Activated T-helper 1 cell treated with anti-CD3 and anti-CD28 coated beads, Interleukin-12 subunit alpha, Interleukin-12 subunit beta, Interleukin-2, Interleukin-4 antibody, amounts not matched to agents 30 ng/mL and 10 ng/mL and 1 ng/mL, durations not matched to agents 14 hours and 24 hours and 36 hours (primary cell): ENCODE measurements at regions of chr9 and their contacts with region 1.

Region 1: GRCh38 chr9:5586391-5586802 is 42.5 kb upstream of the RIC1 start:
- DNase-seq: peak; percentile 26
- H3K4me3 Mint-ChIP-seq: peak overlapping the region; percentile 35
- H3K27ac Mint-ChIP-seq: peak overlapping the region; percentile 95
- H3K4me1 Mint-ChIP-seq: peaks cover 64% of the 10 kb centered on the region
- H3K27me3 Mint-ChIP-seq: no peaks in the 10 kb centered on the region

Region 2: DNA sequence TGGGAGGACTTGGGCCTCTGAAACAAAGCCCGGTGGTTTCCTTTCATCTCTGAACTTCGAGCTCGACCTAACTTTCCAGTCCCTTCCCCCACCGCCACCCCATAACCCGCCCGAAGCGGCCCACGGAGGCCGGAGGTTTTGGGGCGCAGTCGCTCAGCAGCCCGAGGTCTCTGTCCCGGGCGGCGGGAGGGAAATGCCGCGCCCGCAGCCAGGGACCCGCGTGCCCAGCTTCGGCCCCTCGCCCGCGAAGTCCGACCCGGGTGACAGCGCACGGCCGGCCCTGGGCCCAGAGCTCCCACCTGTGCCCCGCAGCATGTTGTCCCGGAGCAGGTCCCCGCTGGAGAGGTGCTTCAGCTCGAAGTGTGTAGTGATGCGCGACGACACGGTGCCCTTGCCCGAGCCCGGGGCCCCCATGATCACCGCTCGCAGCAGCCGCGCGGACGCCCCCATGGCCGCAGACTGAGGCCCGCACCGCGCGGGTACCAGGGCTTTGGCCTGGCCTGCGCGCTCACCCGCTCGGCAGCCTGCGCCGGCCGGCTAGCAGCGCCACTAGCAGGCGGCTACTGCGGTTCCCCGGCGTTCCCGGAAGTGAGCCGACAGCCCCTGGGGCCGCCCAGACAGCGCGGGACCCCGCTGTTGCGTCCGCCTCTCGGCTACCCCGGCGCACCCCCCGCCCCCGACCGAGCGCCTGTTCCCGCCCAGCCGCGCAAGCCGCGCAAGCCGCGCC is 845.6 kb before region 1 on chr9 and contains the start of gene AK3:
- intact Hi-C with region 1: loop called (anchors 5 kb)
- DNase-seq: peak; percentile 81
- H3K4me3 Mint-ChIP-seq: peak within 1 kb of the TSS; percentile 89
- H3K27ac Mint-ChIP-seq: peak within 1 kb of the TSS; percentile 92
- H3K4me1 Mint-ChIP-seq: peaks cover 29% of the 10 kb centered on the region
- H3K27me3 Mint-ChIP-seq: no peaks in the 10 kb centered on the region
- total RNA-seq, gene AK3: 23.9 and 28.5 TPM in 2 replicates

Region 3: DNA sequence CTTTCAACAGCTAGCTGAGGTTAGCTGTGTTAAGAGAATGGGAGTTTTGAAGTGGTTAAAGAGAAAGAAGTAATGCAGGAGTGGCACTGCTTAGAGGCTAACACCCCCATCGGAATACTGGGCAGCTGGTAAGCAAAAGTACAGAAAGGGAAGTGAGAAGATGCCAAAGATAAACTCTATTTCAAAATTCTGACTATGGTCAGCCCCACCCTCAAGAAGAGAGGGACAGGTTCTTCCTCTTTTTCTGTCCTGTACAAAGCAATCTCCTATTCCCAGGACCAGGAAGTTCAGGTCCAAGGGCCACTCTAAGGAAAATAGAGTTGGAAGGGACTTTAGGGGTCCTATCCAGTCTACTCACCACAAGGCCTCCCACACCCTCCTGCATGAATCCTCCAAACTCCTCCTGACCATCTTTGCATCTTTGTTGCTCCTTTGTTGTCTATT is 647.3 kb before region 1 on chr9:
- intact Hi-C with region 1: loop called (anchors 5 kb)
- DNase-seq: peak; percentile 33
- H3K4me3 Mint-ChIP-seq: peak overlapping the region; percentile 5
- H3K27ac Mint-ChIP-seq: peak overlapping the region; percentile 74
- H3K4me1 Mint-ChIP-seq: peaks cover 75% of the 10 kb centered on the region
- H3K27me3 Mint-ChIP-seq: no peaks in the 10 kb centered on the region

Region 4: DNA sequence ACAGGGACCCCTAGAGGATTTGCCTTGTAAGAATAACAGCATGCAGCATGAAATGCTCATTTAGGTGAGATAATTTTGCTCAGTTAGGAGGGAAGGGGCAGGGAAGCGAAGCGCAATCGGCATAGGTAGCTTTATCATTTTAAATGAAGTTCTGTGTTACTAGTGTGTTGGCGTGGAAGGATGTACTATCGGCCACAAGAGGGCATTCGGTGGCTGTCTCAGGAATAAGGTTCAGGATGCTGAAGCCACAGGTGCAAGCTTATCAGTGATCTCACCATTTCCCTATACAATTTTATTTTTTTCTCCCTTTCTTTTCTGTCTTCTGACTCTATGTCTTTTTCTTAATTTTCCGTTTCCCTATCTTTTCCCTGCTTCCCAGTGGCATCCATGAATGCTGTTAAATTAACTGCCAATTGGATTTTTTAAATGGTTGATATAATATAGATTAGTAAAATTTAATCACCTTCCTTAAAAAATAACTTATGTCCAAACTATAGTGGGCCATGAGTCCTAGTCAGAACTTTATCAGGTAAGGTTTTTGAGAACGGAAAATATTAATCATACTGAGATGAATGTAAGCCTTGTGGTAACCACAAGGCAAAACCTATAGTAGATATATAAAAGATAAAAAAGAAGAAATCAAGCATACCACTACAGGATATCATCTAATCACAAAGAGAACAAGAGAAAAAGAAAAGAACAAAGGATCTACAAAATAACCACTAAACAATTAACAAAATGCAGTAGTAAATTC is 399.8 kb before region 1 on chr9:
- intact Hi-C with region 1: loop called (anchors 1 kb)
- DNase-seq: peak; percentile 46
- H3K4me3 Mint-ChIP-seq: no peak overlapping the region
- H3K27ac Mint-ChIP-seq: no peak overlapping the region
- H3K4me1 Mint-ChIP-seq: peaks cover 24% of the 10 kb centered on the region
- H3K27me3 Mint-ChIP-seq: no peaks in the 10 kb centered on the region

Region 5: DNA sequence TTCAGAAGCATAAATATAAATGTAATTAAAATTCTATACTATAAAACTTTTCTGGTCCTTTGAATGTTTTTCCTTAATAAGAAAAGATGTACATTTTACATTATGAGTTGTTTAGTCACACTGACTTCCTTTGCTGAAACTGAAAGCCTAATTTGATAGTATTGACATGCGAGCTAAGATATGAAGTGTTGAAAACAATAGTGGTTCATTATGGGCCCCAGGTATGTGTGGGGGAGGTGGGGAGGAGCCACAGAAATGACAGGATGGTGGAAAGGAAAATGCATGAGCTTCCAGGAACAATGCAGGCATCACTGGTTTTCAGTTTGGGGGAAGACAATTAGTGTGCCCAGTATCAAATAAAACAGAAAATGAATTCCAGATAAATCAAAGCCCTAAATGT is 211.3 kb before region 1 on chr9:
- intact Hi-C with region 1: loop called (anchors 5 kb)
- DNase-seq: no peak
- H3K4me3 Mint-ChIP-seq: peak overlapping the region; percentile 23
- H3K27ac Mint-ChIP-seq: peak overlapping the region; percentile 81
- H3K4me1 Mint-ChIP-seq: peaks cover 32% of the 10 kb centered on the region
- H3K27me3 Mint-ChIP-seq: no peaks in the 10 kb centered on the region

Region 6: GRCh38 chr9:5493679-5494511 is 92.5 kb before region 1 on chr9:
- intact Hi-C with region 1: loop called (anchors 1 kb)
- DNase-seq: peak; percentile 20
- H3K4me3 Mint-ChIP-seq: peak overlapping the region; percentile 45
- H3K27ac Mint-ChIP-seq: peak overlapping the region; percentile 86
- H3K4me1 Mint-ChIP-seq: peaks cover 17% of the 10 kb centered on the region
- H3K27me3 Mint-ChIP-seq: no peaks in the 10 kb centered on the region

Region 7: DNA sequence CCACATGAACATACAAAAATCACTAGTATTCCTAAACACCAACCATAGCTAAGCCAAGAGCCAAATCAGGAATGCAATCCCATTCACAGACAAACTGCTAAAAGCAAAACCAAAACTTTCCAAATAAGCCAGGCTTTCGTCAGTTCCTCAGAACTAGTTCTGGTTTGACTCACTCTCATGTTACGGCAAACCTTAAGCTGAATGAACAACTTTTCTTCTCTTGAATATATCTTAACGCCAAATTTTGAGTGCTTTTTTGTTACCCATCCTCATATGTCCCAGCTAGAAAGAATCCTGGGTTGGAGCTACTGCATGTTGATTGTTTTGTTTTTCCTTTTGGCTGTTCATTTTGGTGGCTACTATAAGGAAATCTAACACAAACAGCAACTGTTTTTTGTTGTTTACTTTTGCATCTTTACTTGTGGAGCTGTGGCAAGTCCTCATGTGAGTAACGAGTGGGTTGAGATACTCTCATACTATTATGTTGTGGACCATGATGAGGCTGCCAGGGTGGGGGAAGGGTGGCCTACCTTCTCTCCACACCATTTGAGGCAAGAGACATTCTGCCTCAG is 76.0 kb before region 1 on chr9 and contains the start of gene PDCD1LG2:
- intact Hi-C with region 1: loop called (anchors 1 kb)
- DNase-seq: peak; percentile 41
- H3K4me3 Mint-ChIP-seq: peak within 1 kb of the TSS; percentile 82
- H3K27ac Mint-ChIP-seq: peak within 1 kb of the TSS; percentile 96
- H3K4me1 Mint-ChIP-seq: peaks cover 68% of the 10 kb centered on the region
- H3K27me3 Mint-ChIP-seq: no peaks in the 10 kb centered on the region
- total RNA-seq, gene PDCD1LG2: 1.1 and 1.4 TPM in 2 replicates

Region 8: DNA sequence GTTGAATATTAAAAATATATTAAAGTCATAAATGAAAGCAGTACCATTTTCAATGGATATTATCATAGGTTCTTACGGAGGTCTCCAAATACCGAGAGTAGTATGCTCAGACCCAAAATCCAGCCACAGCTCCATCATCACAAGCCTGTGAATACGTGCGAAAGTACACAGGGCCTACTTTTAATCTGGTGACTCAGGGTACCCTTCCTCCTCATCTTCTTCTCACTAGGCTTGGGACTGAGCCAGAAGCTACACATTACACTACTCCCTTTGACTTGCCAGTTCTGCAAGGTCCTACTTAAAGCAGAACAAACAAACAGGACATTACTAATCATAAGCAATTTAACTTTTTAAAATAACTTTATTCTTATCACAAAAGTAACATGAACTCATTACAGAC is 34.9 kb after region 1 on chr9:
- intact Hi-C with region 1: no loop called
- DNase-seq: no peak
- H3K4me3 Mint-ChIP-seq: no peak overlapping the region
- H3K27ac Mint-ChIP-seq: no peak overlapping the region
- H3K4me1 Mint-ChIP-seq: peaks cover 32% of the 10 kb centered on the region
- H3K27me3 Mint-ChIP-seq: no peaks in the 10 kb centered on the region